Right ventricle myocardium inferior (tissue), 1 donor: ENCODE measurements at regions of chr22 and their contacts with region 1.

Region 1: GRCh38 chr22:37676736-37677492 is 1.5 kb downstream of the LGALS1 start:
- DNase-seq: peak; percentile 93
- ATAC-seq: peak; percentile 19

Region 2: DNA sequence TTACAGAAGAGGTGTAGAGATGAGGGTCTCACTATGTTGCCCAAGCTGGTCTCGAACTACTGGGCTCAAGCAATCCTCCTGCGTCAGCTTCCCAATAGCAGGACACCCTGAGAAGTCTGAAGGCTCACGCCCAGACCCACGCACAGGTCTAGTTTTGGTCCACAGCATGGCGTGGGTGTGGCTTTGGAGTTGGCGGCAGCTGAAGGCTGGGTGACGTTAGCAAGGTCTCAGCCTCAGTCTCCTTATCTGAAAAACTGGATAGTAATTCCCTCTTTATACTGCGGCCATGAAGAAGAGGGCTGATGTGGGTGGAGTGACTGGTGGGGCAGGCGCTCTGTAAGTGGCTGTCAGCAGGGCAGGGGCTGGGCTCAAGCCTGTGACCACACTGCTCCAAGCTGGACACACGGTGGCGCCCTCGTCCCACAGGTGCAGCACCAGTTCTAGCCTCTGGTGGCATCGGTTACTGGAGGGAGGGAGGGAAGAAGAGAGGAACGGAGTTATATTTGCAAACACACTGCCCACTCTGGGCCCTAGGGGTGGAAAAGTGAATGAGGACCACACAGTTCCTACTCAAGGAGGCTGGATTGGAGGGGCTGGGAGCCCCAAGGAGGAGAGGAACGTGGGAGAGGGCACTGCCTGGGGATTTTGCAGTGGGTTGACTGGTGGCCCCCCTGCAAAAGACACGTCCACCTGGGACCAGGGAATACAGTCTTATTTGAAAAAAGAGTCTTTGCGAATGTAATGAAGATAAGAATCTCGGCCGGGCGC is 138.1 kb before region 1 on chr22:
- intact Hi-C with region 1: loop called (anchors 5 kb)
- DNase-seq: peak; percentile 96
- ATAC-seq: peak; percentile 99

Region 3: GRCh38 chr22:37625737-37626521 is 51.0 kb before region 1 on chr22:
- intact Hi-C with region 1: loop called (anchors 5 kb)
- DNase-seq: peak; percentile 88
- ATAC-seq: peak; percentile 85

Region 4: GRCh38 chr22:37643225-37643847 is 33.6 kb before region 1 on chr22:
- intact Hi-C with region 1: loop called (anchors 2 kb)
- DNase-seq: peak; percentile 94
- ATAC-seq: peak; percentile 86

Region 5: GRCh38 chr22:37658133-37659065 is 18.5 kb before region 1 on chr22 and contains the start of gene PDXP:
- intact Hi-C with region 1: loop called (anchors 1 kb)
- DNase-seq: peak; percentile 99
- ATAC-seq: peak; percentile 98
- total RNA-seq, gene PDXP: 21.4 TPM

Region 6: GRCh38 chr22:37752466-37753087 is 75.7 kb after region 1 on chr22:
- intact Hi-C with region 1: loop called (anchors 2 kb)
- DNase-seq: peak; percentile 96
- ATAC-seq: peak; percentile 86